ENCODE measurements at regions of chr22 and their contacts with region 1.

Region 1: GRCh38 chr22:30005213-30005857 is 74.9 kb upstream of the HORMAD2 start:
- DNase-seq: peak; percentile 71
- ATAC-seq: peak; percentile 76
- H3K4me3 ChIP-seq: no peak overlapping the region
- H3K4me3 Mint-ChIP-seq: no peak overlapping the region
- H3K27ac ChIP-seq: no peak overlapping the region
- H3K27ac Mint-ChIP-seq: no peak overlapping the region
- H3K4me1 ChIP-seq: no peaks in the 10 kb centered on the region
- H3K4me1 Mint-ChIP-seq: no peaks in the 10 kb centered on the region
- H3K27me3 ChIP-seq: no peaks in the 10 kb centered on the region
- H3K27me3 Mint-ChIP-seq: no peaks in the 10 kb centered on the region
- CTCF ChIP-seq: peak; percentile 98

Region 2: DNA sequence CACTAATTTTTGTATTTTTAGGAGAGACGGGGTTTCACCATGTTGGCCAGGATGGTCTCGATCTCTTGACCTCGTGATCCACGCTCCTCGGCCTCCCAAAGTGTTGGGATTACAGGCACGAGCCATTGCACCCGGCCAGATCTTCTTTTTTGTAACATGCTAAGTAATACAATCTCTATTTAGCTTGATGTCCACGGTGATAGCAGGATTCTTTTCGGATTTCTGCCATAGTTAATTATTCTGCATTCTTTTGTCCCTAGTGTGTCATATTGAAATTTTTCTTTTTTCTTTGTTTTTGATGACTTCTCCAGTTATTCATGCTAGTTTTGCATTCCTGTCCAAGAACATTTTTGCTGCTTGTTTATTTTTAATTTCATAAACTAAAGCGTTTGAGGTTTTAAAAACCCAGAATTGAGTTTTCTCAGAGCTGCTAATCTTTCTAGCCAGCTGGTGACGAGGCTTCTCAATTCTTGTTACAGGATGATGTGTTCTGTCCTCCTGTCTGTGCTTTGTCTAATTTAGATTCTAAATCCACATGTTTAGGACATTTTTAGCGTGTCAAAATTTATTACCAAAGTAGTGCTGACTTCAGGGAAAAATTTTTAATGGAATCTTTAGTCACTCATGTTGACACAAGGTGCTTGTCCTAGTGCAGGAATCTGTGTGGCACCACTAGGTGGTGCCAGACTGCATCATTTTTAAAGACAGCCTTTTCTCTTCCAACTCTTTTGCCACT is 380.1 kb before region 1 on chr22:
- CTCF ChIA-PET with region 1: interaction called, 28 read pairs
- POLR2A ChIA-PET with region 1: no interaction called
- intact Hi-C with region 1: no loop called
- DNase-seq: peak; percentile 59
- ATAC-seq: peak; percentile 28
- H3K4me3 ChIP-seq: no peak overlapping the region
- H3K4me3 Mint-ChIP-seq: no peak overlapping the region
- H3K27ac ChIP-seq: no peak overlapping the region
- H3K27ac Mint-ChIP-seq: no peak overlapping the region
- H3K4me1 ChIP-seq: peaks cover 26 to 27% of the 10 kb centered on the region in 2 donors
- H3K4me1 Mint-ChIP-seq: peaks cover 48% of the 10 kb centered on the region
- H3K27me3 ChIP-seq: no peaks in the 10 kb centered on the region
- H3K27me3 Mint-ChIP-seq: no peaks in the 10 kb centered on the region
- CTCF ChIP-seq: peak; percentile 98

Region 3: DNA sequence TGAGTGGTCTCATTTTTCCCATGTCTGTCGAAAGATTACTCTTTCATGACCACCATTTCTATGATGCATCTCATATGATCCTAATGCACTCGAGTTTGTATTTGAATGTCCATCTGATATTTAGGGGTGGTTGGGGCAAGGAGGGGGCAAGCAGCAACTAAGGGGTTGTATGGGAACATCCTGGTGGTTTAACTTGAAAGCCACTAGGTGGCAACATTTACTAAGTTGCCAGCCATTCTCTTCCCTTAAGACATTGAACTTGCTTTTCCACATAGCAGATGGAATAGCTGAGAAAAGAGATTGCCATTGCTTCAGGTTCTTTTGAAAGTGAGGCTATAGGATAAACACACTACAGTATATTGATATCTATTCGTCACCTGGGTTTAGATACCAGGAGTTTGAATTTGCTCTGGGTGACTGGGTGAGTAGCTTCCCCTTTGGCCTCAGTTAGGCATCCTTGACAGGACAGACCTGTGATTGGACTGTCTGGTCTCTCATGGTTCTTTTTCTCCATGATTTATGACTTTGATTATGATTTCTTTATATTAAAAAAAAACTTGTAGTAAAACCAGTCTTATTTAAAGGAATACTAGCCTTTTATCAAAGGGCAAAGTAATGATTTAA is 369.5 kb before region 1 on chr22:
- CTCF ChIA-PET with region 1: interaction called, 37 read pairs
- POLR2A ChIA-PET with region 1: no interaction called
- intact Hi-C with region 1: loop called (anchors 1 kb)
- DNase-seq: peak; percentile 41
- ATAC-seq: no peak
- H3K4me3 ChIP-seq: no peak overlapping the region
- H3K4me3 Mint-ChIP-seq: no peak overlapping the region
- H3K27ac ChIP-seq: no peak overlapping the region
- H3K27ac Mint-ChIP-seq: no peak overlapping the region
- H3K4me1 ChIP-seq: peaks cover 0 to 3% of the 10 kb centered on the region in 2 donors
- H3K4me1 Mint-ChIP-seq: peaks cover 14% of the 10 kb centered on the region
- H3K27me3 ChIP-seq: no peaks in the 10 kb centered on the region
- H3K27me3 Mint-ChIP-seq: no peaks in the 10 kb centered on the region
- CTCF ChIP-seq: peak; percentile 67

Region 4: GRCh38 chr22:29689880-29690213 is 315.5 kb before region 1 on chr22:
- CTCF ChIA-PET with region 1: interaction called, 40 read pairs
- POLR2A ChIA-PET with region 1: no interaction called
- intact Hi-C with region 1: loop called (anchors 1 kb)
- DNase-seq: no peak
- ATAC-seq: no peak
- H3K4me3 ChIP-seq: no peak overlapping the region
- H3K4me3 Mint-ChIP-seq: no peak overlapping the region
- H3K27ac ChIP-seq: no peak overlapping the region
- H3K27ac Mint-ChIP-seq: no peak overlapping the region
- H3K4me1 ChIP-seq: no peaks in the 10 kb centered on the region
- H3K4me1 Mint-ChIP-seq: no peaks in the 10 kb centered on the region
- H3K27me3 ChIP-seq: no peaks in the 10 kb centered on the region
- H3K27me3 Mint-ChIP-seq: no peaks in the 10 kb centered on the region
- CTCF ChIP-seq: peak; percentile 32

Region 5: GRCh38 chr22:29837780-29838598 is 167.3 kb before region 1 on chr22 and contains the start of gene ASCC2:
- CTCF ChIA-PET with region 1: interaction called, 6 read pairs
- POLR2A ChIA-PET with region 1: no interaction called
- intact Hi-C with region 1: loop called (anchors 1 kb)
- DNase-seq: peak; percentile 99
- ATAC-seq: peak; percentile 100
- H3K4me3 ChIP-seq: peak within 1 kb of the TSS; percentile 75 to 96 (median 91)
- H3K4me3 Mint-ChIP-seq: peak within 1 kb of the TSS; percentile 93
- H3K27ac ChIP-seq: peak within 1 kb of the TSS; percentile 80 to 91
- H3K27ac Mint-ChIP-seq: peak within 1 kb of the TSS; percentile 96
- H3K4me1 ChIP-seq: peaks cover 15 to 19% of the 10 kb centered on the region in 2 donors
- H3K4me1 Mint-ChIP-seq: peaks cover 26% of the 10 kb centered on the region
- H3K27me3 ChIP-seq: no peaks in the 10 kb centered on the region
- H3K27me3 Mint-ChIP-seq: peaks cover 4% of the 10 kb centered on the region
- CTCF ChIP-seq: no peak
- total RNA-seq, gene ASCC2: 84.0 and 87.2 TPM in 2 replicates

Region 6: GRCh38 chr22:29994027-29994715 is 11.2 kb before region 1 on chr22:
- CTCF ChIA-PET with region 1: interaction called, 22 read pairs
- POLR2A ChIA-PET with region 1: no interaction called
- intact Hi-C with region 1: no loop called
- DNase-seq: no peak
- ATAC-seq: no peak
- H3K4me3 ChIP-seq: no peak overlapping the region
- H3K4me3 Mint-ChIP-seq: no peak overlapping the region
- H3K27ac ChIP-seq: no peak overlapping the region
- H3K27ac Mint-ChIP-seq: no peak overlapping the region
- H3K4me1 ChIP-seq: no peaks in the 10 kb centered on the region
- H3K4me1 Mint-ChIP-seq: no peaks in the 10 kb centered on the region
- H3K27me3 ChIP-seq: no peaks in the 10 kb centered on the region
- H3K27me3 Mint-ChIP-seq: no peaks in the 10 kb centered on the region
- CTCF ChIP-seq: no peak

Region 7: GRCh38 chr22:30015846-30016245 is 10.5 kb after region 1 on chr22:
- CTCF ChIA-PET with region 1: interaction called, 14 read pairs
- POLR2A ChIA-PET with region 1: no interaction called
- intact Hi-C with region 1: no loop called
- DNase-seq: no peak
- ATAC-seq: no peak
- H3K4me3 ChIP-seq: no peak overlapping the region
- H3K4me3 Mint-ChIP-seq: no peak overlapping the region
- H3K27ac ChIP-seq: no peak overlapping the region
- H3K27ac Mint-ChIP-seq: no peak overlapping the region
- H3K4me1 ChIP-seq: no peaks in the 10 kb centered on the region
- H3K4me1 Mint-ChIP-seq: no peaks in the 10 kb centered on the region
- H3K27me3 ChIP-seq: no peaks in the 10 kb centered on the region
- H3K27me3 Mint-ChIP-seq: no peaks in the 10 kb centered on the region
- CTCF ChIP-seq: no peak

Measured in B cell (primary cell).